PC-3 (cell line): ENCODE measurements at regions of chr6 and their contacts with region 1.

Region 1: DNA sequence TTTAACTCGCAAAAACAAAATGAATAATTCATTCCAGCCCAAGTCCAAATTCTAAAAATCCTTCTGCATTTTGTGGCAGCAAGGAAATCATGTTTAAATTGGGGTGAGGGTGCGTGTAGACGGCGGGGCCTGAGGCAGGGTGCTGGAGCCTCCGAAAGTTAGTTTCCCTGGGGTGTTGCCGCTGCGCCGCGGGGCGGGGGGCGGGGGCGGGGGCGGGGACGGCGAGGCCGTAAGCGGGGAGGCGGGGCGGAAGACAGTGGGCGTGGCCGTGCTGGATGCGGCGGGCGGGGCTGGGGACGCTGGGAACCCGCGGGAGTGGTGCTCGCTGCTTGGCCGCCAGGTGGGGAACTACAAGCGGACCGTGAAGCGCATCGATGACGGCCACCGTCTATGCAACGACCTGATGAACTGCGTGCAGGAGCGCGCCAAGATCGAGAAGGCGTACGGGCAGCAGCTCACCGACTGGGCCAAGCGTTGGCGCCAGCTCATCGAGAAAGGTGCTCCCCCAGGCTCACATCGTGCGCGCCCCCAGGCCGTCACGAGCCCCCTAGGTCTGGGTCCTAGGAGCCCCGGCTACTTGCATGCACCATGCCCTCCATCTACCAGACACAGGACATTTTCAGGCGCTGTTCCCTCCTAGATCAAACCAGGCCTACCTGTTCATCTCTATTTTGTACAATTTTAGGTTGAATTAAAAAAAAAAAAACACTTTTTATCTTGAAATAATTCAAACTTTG is 29.0 kb downstream of the SPDEF start:
- DNase-seq: peak; percentile 95
- ATAC-seq: peak; percentile 94
- H3K4me3 ChIP-seq: peak overlapping the region; percentile 43; the same call in 1 of the 2 replicates
- H3K27ac ChIP-seq: no peak overlapping the region
- H3K4me1 ChIP-seq: peaks cover 5% of the 10 kb centered on the region; the same call in 1 of the 2 replicates
- H3K27me3 ChIP-seq: no peaks in the 10 kb centered on the region
- CTCF ChIP-seq: peak; percentile 60

Region 2: GRCh38 chr6:34260576-34261267 is 266.4 kb before region 1 on chr6:
- CTCF ChIA-PET with region 1: no interaction called
- POLR2A ChIA-PET with region 1: no interaction called
- intact Hi-C with region 1: no loop called
- DNase-seq: no peak
- ATAC-seq: no peak
- H3K4me3 ChIP-seq: no peak overlapping the region
- H3K27ac ChIP-seq: no peak overlapping the region
- H3K4me1 ChIP-seq: no peaks in the 10 kb centered on the region
- H3K27me3 ChIP-seq: no peaks in the 10 kb centered on the region
- CTCF ChIP-seq: no peak

Region 3: DNA sequence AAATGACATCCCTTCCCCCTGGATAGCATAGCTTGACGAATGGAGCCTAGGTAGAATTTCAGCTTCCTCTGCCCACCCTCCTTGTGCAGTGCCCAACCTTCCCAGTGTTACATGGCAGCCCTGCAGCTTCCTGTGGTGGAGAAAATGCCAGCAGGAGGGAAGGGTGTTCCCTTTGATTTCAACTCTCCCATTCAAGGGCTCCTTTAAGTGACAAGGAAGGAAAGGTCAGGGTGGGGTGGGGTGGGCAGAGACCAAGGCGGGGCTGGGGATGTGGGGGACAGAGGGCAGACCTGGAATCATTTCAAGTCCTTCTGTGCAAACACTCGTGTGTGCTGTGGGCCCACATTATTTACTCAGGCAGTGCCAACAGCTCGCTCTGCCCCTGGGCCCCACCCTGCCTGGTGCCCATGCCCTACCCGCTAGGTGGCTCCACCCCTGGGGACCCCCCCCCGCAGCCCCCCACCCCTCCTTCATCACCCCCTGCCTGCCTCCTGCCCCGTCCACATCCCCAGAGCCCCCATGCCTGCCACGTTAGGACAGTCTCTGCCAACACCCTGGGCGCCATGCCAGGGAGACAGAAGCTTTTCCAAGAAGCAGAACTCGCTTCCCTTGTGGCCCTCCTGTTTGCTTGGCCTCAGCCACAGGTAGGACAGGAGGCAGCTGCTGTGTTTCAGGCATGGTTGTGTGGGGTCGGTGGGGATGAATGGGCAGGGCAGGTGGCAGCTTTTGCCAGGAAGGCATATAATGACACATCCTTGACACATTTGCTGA is 19.6 kb after region 1 on chr6:
- CTCF ChIA-PET with region 1: no interaction called
- POLR2A ChIA-PET with region 1: no interaction called
- intact Hi-C with region 1: loop called (anchors 1 kb)
- DNase-seq: peak; percentile 92
- ATAC-seq: peak; percentile 64
- H3K4me3 ChIP-seq: peak overlapping the region; percentile 48
- H3K27ac ChIP-seq: peak overlapping the region; percentile 94
- H3K4me1 ChIP-seq: peaks cover 59% of the 10 kb centered on the region
- H3K27me3 ChIP-seq: no peaks in the 10 kb centered on the region
- CTCF ChIP-seq: no peak

Region 4: DNA sequence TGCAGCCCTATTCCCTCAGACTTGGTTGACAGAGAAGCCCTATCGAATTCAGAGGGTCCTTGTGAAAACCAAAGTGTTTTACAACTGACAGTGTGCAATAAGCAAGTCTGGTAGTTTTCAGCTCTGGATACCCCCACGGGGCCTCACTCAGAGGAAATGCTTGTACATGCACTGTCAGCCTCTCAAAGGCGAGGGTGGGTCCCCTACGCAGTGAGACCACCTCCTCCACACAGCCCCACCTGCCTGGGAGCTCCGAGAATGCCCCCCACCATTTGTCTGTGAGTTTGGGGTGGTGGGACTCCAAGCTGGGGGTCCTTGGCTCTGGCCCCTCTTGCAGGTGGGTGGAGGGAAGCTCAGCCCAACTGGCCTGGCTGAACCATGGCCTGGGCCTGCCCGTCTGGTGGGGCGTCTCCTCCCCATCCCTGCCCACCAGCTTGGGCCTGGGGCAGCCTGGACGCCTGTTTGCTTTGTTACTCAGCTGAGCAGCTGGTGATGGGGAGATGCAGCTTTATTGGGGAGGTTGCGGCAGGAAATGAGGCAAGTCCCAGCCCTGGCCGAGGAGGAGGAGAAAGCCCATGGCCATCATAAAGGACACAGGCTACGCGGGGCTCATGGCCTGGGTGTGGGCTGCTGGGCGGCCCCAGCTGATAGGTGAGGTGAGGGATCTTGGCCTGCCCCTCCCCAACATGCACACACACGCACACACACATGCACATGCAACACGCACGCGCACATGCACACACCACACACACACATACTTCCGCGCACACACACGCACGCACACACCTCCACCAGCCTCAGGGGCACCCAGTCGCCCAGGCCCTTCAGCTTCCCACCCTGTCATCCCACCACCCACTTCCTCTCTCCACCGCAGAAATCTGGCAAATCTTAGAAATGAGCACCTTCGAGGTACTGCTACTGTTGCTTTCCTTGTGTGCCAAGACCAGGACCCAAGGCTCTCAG is 27.5 kb after region 1 on chr6:
- CTCF ChIA-PET with region 1: no interaction called
- POLR2A ChIA-PET with region 1: no interaction called
- intact Hi-C with region 1: loop called (anchors 2 kb)
- DNase-seq: peak; percentile 80
- ATAC-seq: peak; percentile 58
- H3K4me3 ChIP-seq: peak overlapping the region; percentile 73
- H3K27ac ChIP-seq: peak overlapping the region; percentile 65
- H3K4me1 ChIP-seq: peaks cover 43% of the 10 kb centered on the region
- H3K27me3 ChIP-seq: no peaks in the 10 kb centered on the region
- CTCF ChIP-seq: no peak

Region 5: DNA sequence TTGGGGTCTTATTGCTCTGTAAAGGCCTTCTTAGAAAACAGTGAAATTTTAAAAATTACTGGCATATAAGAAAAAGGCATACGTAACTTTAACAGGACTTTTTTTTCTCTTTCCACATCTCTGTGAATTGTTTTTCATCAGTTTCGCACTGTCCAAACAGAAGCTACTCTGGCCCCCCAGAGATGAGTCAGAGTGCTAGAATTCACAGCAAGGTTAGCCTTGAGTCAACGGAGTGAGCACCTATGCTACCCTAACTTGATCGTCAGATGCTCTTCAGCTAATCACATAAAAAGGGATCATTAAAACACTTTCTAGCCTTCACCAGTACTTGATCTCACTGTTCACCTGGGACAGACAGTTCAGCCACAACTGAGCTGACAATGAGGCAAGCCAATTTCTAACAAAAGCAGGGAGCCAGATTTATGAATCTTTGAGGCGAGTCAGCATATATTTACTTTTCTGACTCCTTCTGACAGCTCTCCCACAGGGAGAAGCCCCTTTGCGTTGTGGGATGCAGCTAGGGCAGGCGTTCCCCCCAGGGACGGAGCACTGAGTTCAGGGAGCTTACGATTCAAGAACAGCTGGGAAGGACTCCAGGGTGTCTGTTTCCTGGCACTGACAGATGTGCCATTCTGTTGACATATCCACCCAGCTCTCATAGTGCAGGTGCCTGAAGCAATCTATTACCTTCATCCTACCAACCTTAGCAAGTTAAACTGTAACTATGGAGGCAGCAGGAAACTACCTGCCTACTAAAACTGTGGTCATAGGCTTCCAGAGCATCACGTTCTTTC is 75.4 kb after region 1 on chr6:
- CTCF ChIA-PET with region 1: no interaction called
- POLR2A ChIA-PET with region 1: no interaction called
- intact Hi-C with region 1: loop called (anchors 1 kb)
- DNase-seq: peak; percentile 67
- ATAC-seq: peak; percentile 53
- H3K4me3 ChIP-seq: peak overlapping the region; percentile 5; the same call in 1 of the 2 replicates
- H3K27ac ChIP-seq: peak overlapping the region; percentile 27
- H3K4me1 ChIP-seq: peaks cover 44% of the 10 kb centered on the region
- H3K27me3 ChIP-seq: no peaks in the 10 kb centered on the region
- CTCF ChIP-seq: no peak

Region 6: DNA sequence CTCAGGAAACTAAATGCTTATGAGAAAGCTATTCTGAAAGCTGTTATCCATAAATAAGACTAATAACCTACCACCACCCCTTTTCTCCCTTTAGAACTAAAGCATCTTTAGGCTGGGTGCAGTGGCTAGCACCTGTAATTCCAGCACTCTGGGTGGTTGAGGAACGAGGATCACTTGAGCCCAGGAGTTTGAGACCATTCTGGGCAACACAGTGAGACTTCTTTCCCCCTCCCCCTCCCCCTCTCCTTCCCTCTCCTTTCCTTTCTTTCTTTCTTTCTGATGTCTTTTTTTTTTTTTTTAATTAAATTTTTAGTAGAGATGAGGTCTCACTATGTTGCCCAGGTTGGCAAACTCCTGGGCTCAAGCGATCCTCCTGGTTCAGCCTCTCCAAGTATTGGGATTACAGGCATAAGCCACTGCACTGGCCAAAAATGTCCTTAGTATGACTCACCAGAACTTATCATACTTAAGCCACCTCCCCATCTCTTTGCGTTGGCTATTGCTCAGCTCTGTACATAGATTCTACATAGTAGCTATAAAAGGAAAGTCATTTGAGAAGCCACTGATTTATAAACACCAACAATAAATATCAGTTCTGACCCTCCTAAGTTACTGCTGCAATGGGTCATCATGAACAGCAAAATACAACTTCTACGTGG is 83.8 kb after region 1 on chr6:
- CTCF ChIA-PET with region 1: interaction called, 3 read pairs
- POLR2A ChIA-PET with region 1: no interaction called
- intact Hi-C with region 1: loop called (anchors 1 kb)
- DNase-seq: peak; percentile 94
- ATAC-seq: peak; percentile 93
- H3K4me3 ChIP-seq: peak overlapping the region; percentile 6; the same call in 1 of the 2 replicates
- H3K27ac ChIP-seq: peak overlapping the region; percentile 31
- H3K4me1 ChIP-seq: peaks cover 17% of the 10 kb centered on the region
- H3K27me3 ChIP-seq: no peaks in the 10 kb centered on the region
- CTCF ChIP-seq: no peak

Region 7: DNA sequence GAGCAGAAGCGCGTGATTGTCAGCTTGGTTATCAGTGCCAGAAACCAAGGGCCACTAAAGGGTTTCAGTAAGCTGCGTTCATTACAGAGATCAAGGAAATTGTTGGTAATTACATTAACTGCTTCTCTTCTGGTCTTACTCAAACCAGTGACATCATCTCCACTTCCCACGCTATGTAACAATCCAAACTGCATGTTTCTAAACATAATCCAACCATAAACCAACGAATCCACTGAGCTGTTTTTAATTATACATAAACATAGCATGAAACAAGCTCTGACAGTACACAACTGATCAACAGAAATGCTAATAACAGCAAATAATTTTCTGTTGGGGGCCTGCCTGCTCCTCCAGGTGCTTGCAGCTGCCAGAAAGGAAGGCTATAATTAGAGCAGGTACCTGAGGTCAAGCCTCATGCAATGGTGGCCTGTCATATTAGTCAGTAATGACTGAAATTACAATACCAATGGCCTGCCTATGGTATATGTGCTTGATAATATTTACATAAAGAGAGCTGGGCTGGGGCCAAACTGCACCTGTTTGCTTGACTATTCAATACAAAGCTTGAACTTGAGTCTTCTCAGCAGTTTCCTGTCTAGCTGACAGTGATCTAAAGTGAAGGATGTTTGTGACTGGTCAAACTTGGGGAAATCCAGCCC is 129.3 kb after region 1 on chr6:
- CTCF ChIA-PET with region 1: no interaction called
- POLR2A ChIA-PET with region 1: interaction called, 12 read pairs
- intact Hi-C with region 1: no loop called
- DNase-seq: peak; percentile 72
- ATAC-seq: peak; percentile 35
- H3K4me3 ChIP-seq: peak overlapping the region; percentile 65
- H3K27ac ChIP-seq: peak overlapping the region; percentile 98
- H3K4me1 ChIP-seq: peaks cover 46% of the 10 kb centered on the region
- H3K27me3 ChIP-seq: no peaks in the 10 kb centered on the region
- CTCF ChIP-seq: no peak